Activated B cell treated with CpG ODN at 0.5 μM for 24 hours (primary cell): ENCODE measurements at regions of chr15 and their contacts with region 1.

Region 1: GRCh38 chr15:32994810-32995424 is 199.6 kb downstream of the FMN1 start:
- DNase-seq: no peak
- ATAC-seq: no peak
- H3K4me3 Mint-ChIP-seq: no peak overlapping the region
- H3K27ac Mint-ChIP-seq: no peak overlapping the region
- H3K4me1 Mint-ChIP-seq: no peaks in the 10 kb centered on the region
- H3K27me3 Mint-ChIP-seq: peaks cover 18% of the 10 kb centered on the region
- CTCF ChIP-seq: peak; percentile 27

Region 2: DNA sequence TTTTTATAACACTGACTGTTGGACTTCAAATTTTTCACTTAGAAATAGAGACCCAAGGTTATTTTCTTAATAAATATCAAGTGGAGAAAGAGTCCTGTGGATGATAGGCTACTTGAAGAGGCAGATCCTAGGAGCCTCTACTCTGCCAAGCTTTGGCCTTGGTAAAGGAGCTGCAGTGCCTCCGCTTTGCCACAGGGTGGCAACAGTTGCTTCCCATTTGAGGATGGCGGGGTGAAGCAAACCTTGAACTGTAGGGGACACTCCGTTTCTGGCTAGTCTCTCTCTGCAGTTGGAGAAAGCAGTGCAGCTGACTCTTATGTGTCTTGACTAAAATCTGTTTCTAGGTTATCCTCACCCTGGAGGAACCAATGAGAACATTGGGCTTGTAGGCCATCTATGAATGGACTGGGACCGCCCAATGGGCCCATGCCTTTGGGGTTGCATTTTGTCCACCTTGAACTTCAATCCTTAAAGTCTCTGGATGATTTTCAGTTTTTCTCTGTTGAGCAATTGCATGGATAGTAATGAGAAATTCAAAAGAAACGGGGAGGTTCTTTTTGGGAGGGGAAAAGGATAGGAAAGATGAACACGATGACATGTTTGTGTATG is 343.6 kb before region 1 on chr15:
- CTCF ChIA-PET with region 1: interaction called, 6 read pairs
- POLR2A ChIA-PET with region 1: no interaction called
- intact Hi-C with region 1: loop called (anchors 1 kb)
- DNase-seq: no peak
- ATAC-seq: peak; percentile 78
- H3K4me3 Mint-ChIP-seq: no peak overlapping the region
- H3K27ac Mint-ChIP-seq: no peak overlapping the region
- H3K4me1 Mint-ChIP-seq: no peaks in the 10 kb centered on the region
- H3K27me3 Mint-ChIP-seq: no peaks in the 10 kb centered on the region
- CTCF ChIP-seq: no peak

Region 3: GRCh38 chr15:32657198-32657883 is 337.6 kb before region 1 on chr15:
- CTCF ChIA-PET with region 1: interaction called, 80 read pairs
- POLR2A ChIA-PET with region 1: no interaction called
- intact Hi-C with region 1: loop called (anchors 1 kb)
- DNase-seq: no peak
- ATAC-seq: no peak
- H3K4me3 Mint-ChIP-seq: no peak overlapping the region
- H3K27ac Mint-ChIP-seq: no peak overlapping the region
- H3K4me1 Mint-ChIP-seq: no peaks in the 10 kb centered on the region
- H3K27me3 Mint-ChIP-seq: no peaks in the 10 kb centered on the region
- CTCF ChIP-seq: no peak

Region 4: DNA sequence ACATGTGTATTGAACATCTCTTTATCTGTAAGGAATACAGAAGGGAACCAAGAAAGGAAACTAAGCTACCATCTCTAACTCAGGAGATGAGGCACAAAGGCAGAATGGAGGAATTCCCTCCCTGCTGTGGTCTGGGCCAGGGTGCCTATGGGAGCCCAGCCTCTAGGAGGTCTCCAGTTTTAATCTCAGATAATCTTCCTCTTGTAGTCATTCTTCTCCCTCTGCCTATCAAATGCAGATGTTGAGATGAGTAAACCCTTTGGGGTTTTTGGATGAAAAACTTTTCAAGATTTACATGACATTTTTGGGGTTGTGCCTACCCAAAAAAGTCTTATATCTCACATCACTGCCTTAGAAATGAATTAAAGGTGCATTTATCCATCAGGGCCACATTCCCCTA is 330.1 kb before region 1 on chr15:
- CTCF ChIA-PET with region 1: interaction called, 80 read pairs
- POLR2A ChIA-PET with region 1: no interaction called
- intact Hi-C with region 1: loop called (anchors 1 kb)
- DNase-seq: no peak
- ATAC-seq: no peak
- H3K4me3 Mint-ChIP-seq: no peak overlapping the region
- H3K27ac Mint-ChIP-seq: no peak overlapping the region
- H3K4me1 Mint-ChIP-seq: no peaks in the 10 kb centered on the region
- H3K27me3 Mint-ChIP-seq: no peaks in the 10 kb centered on the region
- CTCF ChIP-seq: no peak

Region 5: DNA sequence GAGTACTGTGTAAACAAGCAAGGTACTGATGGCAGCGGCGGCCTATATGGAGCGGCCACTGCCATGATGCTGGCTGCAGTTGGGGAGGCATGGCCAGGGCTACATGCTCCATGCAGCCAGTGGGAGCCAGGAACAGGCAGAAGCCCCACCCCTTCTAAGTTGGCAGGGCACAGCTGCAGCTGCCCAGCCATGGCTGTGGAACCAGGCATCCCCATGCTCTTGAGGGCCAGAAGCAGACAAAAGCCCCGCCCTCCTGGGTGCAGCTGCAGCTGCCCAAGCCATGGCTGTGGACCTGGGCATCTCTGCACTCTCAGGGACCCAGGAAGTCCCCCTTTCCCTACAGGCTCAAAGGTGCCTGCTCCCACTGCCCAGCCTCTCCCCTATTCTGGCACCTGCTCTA is 48.7 kb after region 1 on chr15:
- CTCF ChIA-PET with region 1: no interaction called
- POLR2A ChIA-PET with region 1: no interaction called
- intact Hi-C with region 1: no loop called
- DNase-seq: no peak
- ATAC-seq: no peak
- H3K4me3 Mint-ChIP-seq: no peak overlapping the region
- H3K27ac Mint-ChIP-seq: no peak overlapping the region
- H3K4me1 Mint-ChIP-seq: no peaks in the 10 kb centered on the region
- H3K27me3 Mint-ChIP-seq: peaks cover 4% of the 10 kb centered on the region
- CTCF ChIP-seq: no peak